ENCODE measurements at regions of chr6 and their contacts with region 1.

Region 1: GRCh38 chr6:143337201-143337949 is 113.1 kb downstream of the ADAT2 start:
- DNase-seq: peak; percentile 95
- ATAC-seq: peak; percentile 99
- H3K4me3 Mint-ChIP-seq: no peak overlapping the region
- H3K27ac Mint-ChIP-seq: no peak overlapping the region
- H3K4me1 Mint-ChIP-seq: peaks cover 12% of the 10 kb centered on the region
- H3K27me3 Mint-ChIP-seq: no peaks in the 10 kb centered on the region
- CTCF ChIP-seq: peak; percentile 88

Region 2: DNA sequence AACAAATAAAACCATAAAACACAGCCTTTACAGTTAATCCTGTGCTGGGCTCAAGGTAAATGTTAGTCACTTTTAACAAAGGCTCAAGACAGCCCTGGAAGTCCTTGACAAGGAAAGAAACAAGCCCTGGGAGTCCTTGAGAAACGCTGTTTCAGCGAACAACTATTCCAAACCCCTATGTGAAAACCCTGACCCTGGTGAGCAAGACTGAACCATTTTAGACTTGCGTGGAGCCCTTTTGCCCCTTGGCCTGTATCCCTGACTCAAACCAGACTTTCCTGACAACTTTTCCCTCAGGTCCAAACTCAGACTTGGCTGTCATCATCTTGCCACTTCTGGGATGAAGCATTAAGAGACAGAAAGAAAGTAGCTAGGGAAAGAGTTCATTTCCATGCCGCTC is 96.3 kb before region 1 on chr6:
- CTCF ChIA-PET with region 1: interaction called, 10 read pairs
- POLR2A ChIA-PET with region 1: no interaction called
- DNase-seq: no peak
- ATAC-seq: no peak
- H3K4me3 Mint-ChIP-seq: no peak overlapping the region
- H3K27ac Mint-ChIP-seq: peak overlapping the region; percentile 63; the same call in 1 of the 2 replicates
- H3K4me1 Mint-ChIP-seq: peaks cover 9% of the 10 kb centered on the region
- H3K27me3 Mint-ChIP-seq: no peaks in the 10 kb centered on the region
- CTCF ChIP-seq: no peak

Region 3: DNA sequence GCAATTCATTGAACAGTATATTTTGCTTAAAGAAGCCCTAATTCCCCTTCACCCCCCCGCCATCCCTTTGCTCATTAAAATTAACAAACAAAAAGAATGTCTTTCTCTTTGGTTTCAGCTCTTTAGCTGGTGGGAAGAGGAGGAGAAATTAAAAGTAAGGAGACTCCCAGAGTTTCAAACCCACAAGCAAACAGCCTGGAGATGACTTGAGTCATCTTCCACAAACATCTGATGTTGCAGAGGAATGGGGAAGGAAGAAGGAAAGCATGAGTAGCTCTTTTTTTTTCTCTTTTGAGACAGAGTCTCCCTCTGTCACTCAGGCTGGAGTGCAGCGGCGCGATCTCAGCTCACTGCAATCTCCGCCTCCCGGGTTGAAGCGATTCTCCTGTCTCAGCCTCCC is 76.5 kb before region 1 on chr6:
- CTCF ChIA-PET with region 1: interaction called, 13 read pairs
- POLR2A ChIA-PET with region 1: no interaction called
- DNase-seq: no peak
- ATAC-seq: no peak
- H3K4me3 Mint-ChIP-seq: no peak overlapping the region
- H3K27ac Mint-ChIP-seq: no peak overlapping the region
- H3K4me1 Mint-ChIP-seq: peaks cover 35% of the 10 kb centered on the region
- H3K27me3 Mint-ChIP-seq: no peaks in the 10 kb centered on the region
- CTCF ChIP-seq: no peak

Region 4: DNA sequence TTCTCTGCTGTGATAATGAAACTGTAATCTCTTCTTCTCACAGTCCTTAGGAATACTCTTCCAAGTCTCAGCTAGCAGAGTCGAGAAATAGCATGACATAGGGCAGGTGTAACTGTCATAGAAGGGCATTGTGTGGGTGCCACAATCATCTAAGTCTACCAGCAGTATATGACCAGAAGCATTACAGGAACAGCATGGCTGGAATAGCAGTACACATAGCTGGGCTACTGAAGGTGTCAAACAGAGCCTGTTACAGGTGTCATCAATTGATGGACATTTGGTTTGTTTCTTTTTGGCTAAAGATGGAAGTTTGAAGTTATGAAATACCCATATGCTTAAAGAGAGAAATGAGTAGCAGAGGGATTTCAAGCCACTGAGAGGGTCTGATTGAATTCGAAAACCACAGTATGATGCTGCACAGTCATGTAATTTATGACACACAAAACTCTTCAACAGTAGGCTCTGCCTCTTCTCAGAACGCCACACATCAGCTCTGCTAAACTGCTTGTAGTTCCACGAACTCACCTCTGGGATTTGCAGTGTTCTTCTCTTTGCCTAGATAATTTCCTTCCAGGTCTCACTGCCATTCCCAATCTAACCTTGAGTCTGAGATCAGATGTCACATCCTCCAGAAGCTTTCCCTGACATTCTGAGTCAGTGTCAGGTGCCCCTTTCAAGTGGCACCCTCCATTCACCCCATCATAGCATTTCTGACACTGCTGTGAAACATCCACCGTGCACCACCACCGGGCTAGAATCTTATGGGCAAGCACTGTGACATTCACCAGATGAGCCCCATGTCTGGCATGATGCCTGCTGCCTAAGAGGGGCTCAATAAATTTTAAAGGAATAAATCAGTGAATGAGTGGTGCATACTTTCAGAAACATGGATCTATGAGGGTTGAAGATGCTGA is 37.9 kb before region 1 on chr6:
- CTCF ChIA-PET with region 1: interaction called, 14 read pairs
- POLR2A ChIA-PET with region 1: no interaction called
- DNase-seq: no peak
- ATAC-seq: peak; percentile 75
- H3K4me3 Mint-ChIP-seq: no peak overlapping the region
- H3K27ac Mint-ChIP-seq: no peak overlapping the region
- H3K4me1 Mint-ChIP-seq: peaks cover 8% of the 10 kb centered on the region
- H3K27me3 Mint-ChIP-seq: no peaks in the 10 kb centered on the region
- CTCF ChIP-seq: no peak

Region 5: DNA sequence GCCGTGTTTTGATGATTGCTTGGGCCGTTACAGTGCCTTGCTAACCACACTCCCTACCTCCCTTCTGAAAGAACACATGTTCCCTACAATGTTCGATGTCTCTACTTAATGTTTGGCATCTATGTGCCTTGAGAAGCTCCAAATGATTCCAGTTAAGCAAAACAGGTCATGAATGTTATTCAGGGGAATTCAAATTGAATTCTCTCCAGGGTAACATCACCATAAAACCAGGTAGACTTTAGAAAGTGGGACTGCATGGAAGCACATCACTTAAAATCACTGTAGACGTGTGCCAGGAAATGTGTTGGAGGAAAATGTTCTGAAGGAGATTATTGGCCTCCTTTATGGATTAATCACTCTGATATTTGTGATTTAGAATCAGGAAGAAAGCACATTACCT is 15.0 kb before region 1 on chr6:
- CTCF ChIA-PET with region 1: interaction called, 11 read pairs
- POLR2A ChIA-PET with region 1: no interaction called
- DNase-seq: no peak
- ATAC-seq: no peak
- H3K4me3 Mint-ChIP-seq: no peak overlapping the region
- H3K27ac Mint-ChIP-seq: no peak overlapping the region
- H3K4me1 Mint-ChIP-seq: no peaks in the 10 kb centered on the region
- H3K27me3 Mint-ChIP-seq: no peaks in the 10 kb centered on the region
- CTCF ChIP-seq: no peak

Region 6: GRCh38 chr6:143427109-143427817 is 89.9 kb after region 1 on chr6:
- CTCF ChIA-PET with region 1: interaction called, 22 read pairs
- POLR2A ChIA-PET with region 1: no interaction called
- DNase-seq: peak; percentile 84
- ATAC-seq: peak; percentile 100
- H3K4me3 Mint-ChIP-seq: no peak overlapping the region
- H3K27ac Mint-ChIP-seq: no peak overlapping the region
- H3K4me1 Mint-ChIP-seq: no peaks in the 10 kb centered on the region; the same call in 1 of the 2 replicates
- H3K27me3 Mint-ChIP-seq: no peaks in the 10 kb centered on the region
- CTCF ChIP-seq: peak; percentile 76